Right ventricle myocardium inferior (tissue), 1 donor: ENCODE measurements at regions of chr3 and their contacts with region 1.

Region 1: DNA sequence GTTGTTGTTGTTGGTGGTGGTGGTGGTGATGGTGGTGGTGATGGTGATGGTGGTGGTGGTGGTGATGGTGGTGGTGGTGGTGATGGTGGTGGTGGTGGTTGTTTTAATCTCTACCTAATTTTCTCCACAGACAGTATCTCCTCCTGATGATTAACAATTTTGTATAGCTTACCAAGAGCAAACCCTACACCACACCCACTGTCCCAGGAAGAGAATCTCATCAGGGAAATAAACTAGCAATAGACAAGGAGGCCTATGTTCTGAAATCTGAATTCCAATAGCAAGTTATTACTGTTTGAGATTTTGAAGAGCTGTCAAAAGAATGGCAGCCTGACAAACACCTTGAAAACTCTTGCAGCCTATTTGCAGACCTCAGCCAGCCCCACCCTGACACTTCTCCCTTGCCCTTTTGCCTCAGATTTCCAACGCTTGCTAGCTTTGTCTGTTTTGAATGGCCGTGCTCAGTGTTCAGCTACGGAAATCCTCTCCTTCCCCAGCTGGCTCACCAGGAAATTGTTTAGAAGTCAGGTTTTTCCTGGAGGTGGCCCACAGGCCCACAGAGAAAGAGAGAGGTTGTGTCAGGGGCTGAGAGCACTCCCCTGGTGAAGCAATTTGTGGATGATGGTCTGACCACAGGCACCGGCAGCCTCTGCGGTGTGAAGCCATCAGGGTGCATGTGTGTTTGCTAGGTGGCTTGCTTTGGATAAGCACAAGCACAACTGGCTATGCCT is 101.6 kb downstream of the MAGI1 start:
- DNase-seq: no peak
- ATAC-seq: no peak

Region 2: DNA sequence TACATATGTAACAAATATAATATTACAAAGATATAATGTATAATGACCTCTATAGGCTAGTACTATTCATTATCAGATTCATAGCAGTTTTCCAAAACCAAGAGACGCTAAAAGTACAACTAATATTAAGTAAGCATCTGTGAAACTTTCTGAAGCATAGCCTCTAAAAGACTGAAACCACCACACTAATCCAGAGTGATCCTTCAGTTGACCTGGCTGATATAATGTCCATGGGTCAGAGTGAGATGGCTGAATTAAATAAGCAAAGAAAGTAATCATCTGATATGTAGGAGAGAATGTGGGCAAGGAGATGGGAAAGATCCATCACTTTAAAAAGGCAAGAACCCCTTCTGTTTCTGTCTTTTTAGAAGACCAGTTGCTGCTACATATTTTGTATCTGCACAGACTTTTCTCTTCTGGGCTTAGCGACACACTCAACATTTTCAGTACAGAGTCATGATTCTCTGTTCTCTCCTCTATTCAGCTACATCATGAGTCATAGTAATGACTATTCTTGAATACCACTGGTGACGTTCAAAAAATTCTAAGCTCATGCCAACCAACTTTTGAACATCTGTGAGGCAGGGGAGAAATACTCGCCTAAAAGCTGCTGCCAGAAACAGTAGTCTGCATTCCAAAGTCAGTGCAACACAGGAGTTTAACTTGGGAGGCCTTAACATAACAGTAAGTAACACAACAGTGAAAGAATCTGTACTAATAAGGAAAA is 47.9 kb before region 1 on chr3:
- intact Hi-C with region 1: no loop called
- DNase-seq: no peak
- ATAC-seq: peak; percentile 80

Region 3: GRCh38 chr3:65953301-65953812 is 16.3 kb after region 1 on chr3:
- intact Hi-C with region 1: loop called (anchors 2 kb)
- DNase-seq: no peak
- ATAC-seq: peak; percentile 70

Region 4: GRCh38 chr3:66115858-66116654 is 179.0 kb after region 1 on chr3:
- intact Hi-C with region 1: no loop called
- DNase-seq: no peak
- ATAC-seq: peak; percentile 78